ENCODE measurements at regions of chr14 and their contacts with region 1.

Region 1: DNA sequence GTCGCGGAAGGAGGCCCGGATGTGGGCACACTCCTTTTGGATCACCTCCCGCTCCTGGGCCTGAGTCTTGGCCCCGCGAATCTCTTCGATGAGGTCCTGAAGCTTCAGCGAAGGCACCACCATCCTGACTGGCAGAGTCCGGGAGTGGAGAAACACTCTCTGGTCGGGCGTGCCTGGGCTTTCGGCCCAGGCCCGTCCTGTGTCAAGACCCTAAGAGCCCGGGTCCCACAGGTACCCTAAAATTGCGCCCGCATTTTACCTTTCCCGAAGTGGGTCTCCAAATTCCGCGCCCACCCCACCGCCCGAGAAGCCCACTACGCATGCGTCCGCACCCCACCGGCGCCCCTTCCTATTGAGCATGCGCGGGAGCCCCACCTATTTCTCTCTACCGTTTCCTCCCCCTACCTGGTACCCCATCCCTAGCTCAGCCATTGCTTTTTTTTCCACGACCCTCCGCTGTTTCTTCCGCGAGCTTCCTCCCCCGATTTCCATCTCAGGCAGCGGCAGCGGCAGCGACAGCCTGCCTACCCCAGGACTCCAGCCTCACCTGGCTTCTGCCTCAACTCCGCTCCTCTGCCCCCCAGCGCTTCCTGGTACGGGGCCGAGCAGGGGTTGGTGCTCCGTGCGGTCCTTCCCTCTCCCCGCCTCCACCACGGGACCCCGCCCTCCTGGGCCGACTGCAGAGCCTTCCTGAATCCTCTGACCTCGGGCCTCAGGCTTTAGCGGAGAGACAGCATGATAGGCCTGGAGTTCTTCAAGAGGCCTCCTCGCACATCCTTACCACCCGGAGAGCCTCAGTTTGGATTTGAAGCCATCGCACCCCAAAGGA is at the start of gene AP1G2:
- DNase-seq: peak; percentile 87
- H3K4me3 Mint-ChIP-seq: peak within 1 kb of the TSS; percentile 100
- H3K27ac Mint-ChIP-seq: peak within 1 kb of the TSS; percentile 97
- H3K4me1 Mint-ChIP-seq: peaks cover 43% of the 10 kb centered on the region
- H3K27me3 Mint-ChIP-seq: peaks cover 4% of the 10 kb centered on the region
- total RNA-seq, gene AP1G2: 137 and 145 TPM in 2 replicates

Region 2: DNA sequence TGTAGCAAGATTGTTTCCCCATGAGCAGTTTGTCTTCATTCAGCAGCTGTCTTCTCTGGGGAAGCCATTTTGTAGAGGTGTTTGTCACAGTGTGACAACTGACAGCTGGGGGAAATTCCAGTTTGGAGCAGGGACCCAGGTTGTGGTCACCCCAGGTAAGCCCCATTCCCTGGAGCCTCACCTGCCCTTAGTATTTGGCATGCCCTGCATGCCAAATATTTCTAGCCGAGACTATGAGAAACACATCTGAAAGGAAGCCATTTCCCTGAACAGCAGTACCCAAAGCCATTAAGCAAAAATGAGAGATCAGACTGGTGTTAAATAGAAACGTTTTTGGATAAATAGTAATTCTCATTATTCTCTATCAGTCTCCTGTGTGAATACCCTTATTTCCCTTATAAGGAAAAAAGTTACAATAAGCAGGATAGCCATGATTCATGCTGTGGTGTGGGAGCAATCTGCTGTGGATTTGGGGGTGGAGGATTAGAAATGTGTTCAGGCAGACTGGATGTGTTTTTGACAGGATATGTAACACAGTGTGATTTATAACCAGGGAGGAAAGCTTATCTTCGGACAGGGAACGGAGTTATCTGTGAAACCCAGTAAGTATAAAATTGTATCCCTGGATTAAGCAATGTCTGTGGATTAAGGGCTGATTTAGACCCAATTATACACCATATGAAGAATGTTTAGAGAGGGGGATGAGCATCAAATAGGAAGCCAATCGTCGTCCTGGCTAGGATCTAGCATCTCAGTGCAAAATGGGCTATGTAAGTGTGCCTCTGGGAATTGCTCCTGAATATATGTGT is 1047.3 kb before region 1 on chr14:
- intact Hi-C with region 1: loop called (anchors 10 kb)
- DNase-seq: no peak
- H3K4me3 Mint-ChIP-seq: peak overlapping the region; percentile 84
- H3K27ac Mint-ChIP-seq: peak overlapping the region; percentile 95
- H3K4me1 Mint-ChIP-seq: peaks cover 98% of the 10 kb centered on the region
- H3K27me3 Mint-ChIP-seq: no peaks in the 10 kb centered on the region

Region 3: DNA sequence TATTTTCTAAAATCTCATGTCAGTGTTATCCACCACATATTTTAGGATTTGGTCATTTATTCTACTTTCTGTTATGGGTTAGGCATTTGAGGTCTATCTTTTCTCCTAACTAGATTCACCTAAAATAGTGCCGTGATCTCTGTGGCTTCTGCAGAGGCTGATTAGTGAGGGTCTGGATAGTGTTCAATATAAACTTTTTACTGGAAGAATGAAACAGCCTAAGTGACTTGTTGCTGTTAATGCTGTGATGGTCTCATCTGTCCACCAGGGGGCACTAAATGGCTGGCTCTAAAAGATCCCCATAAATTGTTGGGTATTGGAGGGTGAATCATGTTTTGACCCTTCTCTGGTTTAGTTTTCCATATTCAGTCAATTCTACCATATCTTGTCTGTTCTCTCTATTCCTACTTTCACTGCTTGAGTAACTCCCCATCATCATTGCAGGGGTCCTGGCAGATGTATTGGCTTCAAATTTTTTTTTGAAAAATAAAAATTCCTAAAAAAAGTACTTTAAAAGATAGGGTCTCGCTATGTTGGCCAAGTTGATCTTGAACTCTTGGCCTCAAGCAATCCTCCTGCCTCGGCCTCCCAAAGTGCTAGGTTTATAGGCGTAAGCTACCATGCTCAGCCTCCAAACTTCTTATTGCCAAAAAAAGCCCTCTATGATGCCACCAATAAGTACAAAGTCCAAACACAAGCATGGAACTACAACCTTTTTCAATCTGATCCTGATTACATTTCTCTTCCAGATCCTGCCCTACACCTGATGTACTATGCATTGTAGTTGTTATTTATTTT is 239.3 kb before region 1 on chr14:
- intact Hi-C with region 1: loop called (anchors 1 kb)
- DNase-seq: peak; percentile 47
- H3K4me3 Mint-ChIP-seq: no peak overlapping the region
- H3K27ac Mint-ChIP-seq: no peak overlapping the region
- H3K4me1 Mint-ChIP-seq: peaks cover 4% of the 10 kb centered on the region
- H3K27me3 Mint-ChIP-seq: peaks cover under 1% of the 10 kb centered on the region

Region 4: DNA sequence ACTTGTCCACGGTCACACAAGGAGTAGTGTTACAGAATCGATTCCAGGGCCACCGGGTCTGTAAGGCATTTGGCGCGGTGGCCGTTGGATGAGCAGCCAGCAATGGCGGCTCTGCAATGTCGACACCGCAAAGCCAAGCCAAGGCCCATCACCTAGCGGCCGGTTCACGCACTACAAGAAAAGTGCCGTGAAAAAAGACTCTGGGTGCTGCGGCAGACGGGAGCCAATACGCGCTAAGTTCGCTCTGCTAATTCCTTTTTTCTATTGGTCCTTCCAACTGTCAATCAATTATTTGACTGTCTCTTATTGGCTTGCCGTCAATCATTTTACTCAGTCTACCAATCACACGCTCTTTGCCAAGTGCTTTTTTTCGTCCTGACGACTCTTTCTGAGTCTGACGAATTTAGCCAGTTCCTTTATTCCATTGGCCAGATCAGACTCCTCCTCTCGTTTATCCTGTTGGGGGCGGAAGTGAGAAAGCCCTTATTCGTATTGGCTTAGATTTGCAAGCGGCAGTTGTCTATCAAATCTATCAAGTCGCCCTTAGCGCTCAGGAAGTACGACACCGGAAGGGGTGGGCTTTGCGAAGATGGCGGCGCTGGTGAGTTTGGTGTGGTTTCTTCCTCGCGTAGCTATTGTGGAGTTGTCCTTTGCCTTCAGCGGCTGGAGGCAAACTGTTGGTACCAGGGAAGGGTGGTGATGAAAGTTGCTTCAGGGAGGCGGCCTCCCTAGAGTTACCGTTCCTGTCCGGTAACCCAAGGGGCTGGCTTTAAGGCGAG is 98.1 kb before region 1 on chr14 and contains the start of gene NGDN:
- intact Hi-C with region 1: loop called (anchors 2 kb)
- DNase-seq: peak; percentile 89
- H3K4me3 Mint-ChIP-seq: no peak within 1 kb of the TSS
- H3K27ac Mint-ChIP-seq: peak within 1 kb of the TSS; percentile 45
- H3K4me1 Mint-ChIP-seq: peaks cover 11% of the 10 kb centered on the region
- H3K27me3 Mint-ChIP-seq: peaks cover 2% of the 10 kb centered on the region
- total RNA-seq, gene NGDN: 80.1 and 84.5 TPM in 2 replicates

Region 5: GRCh38 chr14:23478111-23478759 is 89.2 kb before region 1 on chr14:
- intact Hi-C with region 1: loop called (anchors 1 kb)
- DNase-seq: peak; percentile 44
- H3K4me3 Mint-ChIP-seq: no peak overlapping the region
- H3K27ac Mint-ChIP-seq: peak overlapping the region; percentile 62
- H3K4me1 Mint-ChIP-seq: peaks cover 4% of the 10 kb centered on the region
- H3K27me3 Mint-ChIP-seq: no peaks in the 10 kb centered on the region

Region 6: DNA sequence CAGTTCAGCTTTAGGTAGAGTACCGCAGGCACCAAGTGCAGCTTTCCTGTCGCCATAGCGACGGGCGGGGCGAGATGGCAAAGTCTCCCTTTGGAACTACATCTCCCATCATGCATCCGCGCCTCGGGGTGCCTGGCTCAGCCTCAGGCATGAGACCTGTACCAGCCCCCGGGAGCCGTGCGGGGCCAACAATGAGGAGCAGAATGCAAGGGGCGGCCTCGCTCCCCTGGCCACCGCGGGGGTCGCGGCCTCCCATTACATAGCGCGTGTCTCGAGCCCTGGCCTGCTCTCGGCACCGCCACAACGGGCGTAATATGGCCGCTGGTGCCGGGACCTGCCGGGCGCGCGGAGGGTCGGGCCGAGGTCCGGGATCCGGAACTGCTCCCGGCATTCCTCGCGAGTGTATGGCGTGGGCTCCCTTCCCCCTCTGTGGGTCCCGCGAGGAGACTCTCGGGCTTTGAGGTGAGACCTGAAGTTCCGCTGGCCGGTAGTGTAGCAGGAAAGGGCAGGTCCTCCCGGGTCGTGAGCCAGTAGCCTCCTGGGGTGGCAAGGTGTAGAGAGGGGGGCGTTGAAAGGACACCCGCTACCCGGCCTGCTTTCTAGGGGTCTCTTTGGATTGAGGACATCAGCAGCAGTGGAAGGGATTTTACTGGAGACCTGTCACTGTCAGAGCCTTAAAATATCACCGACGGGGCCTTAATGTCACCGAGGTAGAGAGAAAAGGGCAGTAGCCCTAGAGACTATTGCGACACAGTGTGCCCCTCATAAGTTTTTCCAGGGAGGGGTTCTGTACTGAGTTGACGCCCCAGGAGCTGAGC is 11.3 kb before region 1 on chr14 and contains the start of gene THTPA:
- intact Hi-C with region 1: loop called (anchors 1 kb)
- DNase-seq: peak; percentile 88
- H3K4me3 Mint-ChIP-seq: peak within 1 kb of the TSS; percentile 97
- H3K27ac Mint-ChIP-seq: peak within 1 kb of the TSS; percentile 97
- H3K4me1 Mint-ChIP-seq: peaks cover 31% of the 10 kb centered on the region
- H3K27me3 Mint-ChIP-seq: no peaks in the 10 kb centered on the region
- total RNA-seq, gene THTPA: 14.3 and 14.5 TPM in 2 replicates